ENCODE measurements at regions of chr9 and their contacts with region 1.

Region 1: DNA sequence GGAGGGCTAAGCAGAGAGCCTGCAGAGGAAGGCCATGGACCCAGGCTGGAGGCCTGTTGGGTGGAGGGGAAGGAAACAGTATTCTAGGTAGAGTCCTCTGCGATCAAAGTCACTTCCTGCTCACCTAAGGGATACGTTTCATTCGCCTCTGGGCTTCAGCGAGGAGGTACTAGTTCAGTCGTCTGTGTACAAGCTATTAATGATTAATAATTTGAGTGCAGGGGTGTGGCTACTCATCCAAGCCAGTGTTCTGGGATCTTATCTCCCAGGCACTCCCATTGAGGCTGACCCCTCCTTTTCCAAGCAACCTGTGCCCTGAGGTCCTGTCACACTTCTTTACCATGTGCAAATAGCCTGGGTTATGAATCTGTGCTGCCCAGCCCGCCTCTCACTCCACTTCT is 25.2 kb downstream of the RALGPS1 start:
- DNase-seq: no peak
- ATAC-seq: no peak
- H3K4me3 Mint-ChIP-seq: no peak overlapping the region
- H3K27ac Mint-ChIP-seq: no peak overlapping the region
- H3K4me1 Mint-ChIP-seq: peaks cover 16% of the 10 kb centered on the region
- H3K27me3 Mint-ChIP-seq: no peaks in the 10 kb centered on the region
- CTCF ChIP-seq: no peak

Region 2: DNA sequence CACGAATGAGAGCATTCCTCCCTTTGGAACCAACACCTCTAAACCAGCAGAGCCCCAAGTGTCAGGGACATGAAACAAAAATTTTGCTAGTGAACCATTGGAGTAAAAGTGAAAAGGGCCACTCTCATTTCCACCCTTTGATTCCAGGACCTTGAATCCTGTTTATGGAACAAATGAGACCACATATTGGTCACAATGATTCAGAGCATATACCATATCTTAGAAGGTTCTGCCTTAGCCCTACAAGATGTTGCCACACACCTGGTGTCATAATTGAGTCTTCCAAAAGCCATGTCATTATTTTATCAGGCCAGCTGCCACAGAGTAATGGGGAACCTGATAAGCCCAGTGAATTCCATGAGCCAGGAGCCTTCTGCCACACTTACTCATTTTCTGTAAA is 201.3 kb before region 1 on chr9:
- CTCF ChIA-PET with region 1: no interaction called
- POLR2A ChIA-PET with region 1: no interaction called
- DNase-seq: no peak
- ATAC-seq: no peak
- H3K4me3 Mint-ChIP-seq: no peak overlapping the region
- H3K27ac Mint-ChIP-seq: no peak overlapping the region
- H3K4me1 Mint-ChIP-seq: no peaks in the 10 kb centered on the region
- H3K27me3 Mint-ChIP-seq: peaks cover 63% of the 10 kb centered on the region
- CTCF ChIP-seq: no peak

Region 3: DNA sequence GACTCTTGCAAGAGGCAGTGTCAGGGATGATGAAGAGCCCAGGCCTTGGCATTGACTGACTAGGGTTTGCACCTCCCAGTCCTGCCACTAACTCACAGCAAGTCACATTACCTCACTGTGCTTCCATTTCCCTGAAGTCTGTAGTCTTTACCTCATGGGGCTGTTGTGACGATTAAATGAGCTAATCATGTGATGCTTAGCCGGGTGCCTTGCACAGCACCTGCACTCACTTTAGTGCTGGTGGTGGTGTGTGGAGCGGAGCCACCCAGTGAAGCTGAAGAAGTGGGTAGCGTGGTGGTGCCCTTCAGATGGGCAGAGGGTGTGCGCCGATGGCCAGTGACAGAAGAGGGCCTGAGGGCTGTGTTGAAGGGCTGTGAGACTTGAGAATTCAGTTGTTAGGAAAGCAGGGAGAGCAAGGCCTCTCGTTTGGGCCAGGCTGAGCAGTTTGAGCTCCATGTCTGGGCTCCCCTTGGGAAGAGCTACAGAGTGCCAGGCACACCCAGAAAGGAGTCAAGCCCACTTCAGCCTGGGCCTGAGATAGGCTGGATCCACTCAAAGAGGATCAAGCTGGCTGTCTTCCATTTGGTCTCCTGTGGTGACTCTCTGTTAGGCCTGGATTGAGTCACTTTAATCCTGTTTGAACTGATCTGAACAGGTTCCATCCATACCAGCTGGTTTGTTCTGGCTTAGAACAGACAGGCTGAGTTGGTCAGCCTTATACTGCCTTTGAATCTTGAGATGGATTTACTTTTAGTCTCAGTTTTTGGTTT is 17.3 kb after region 1 on chr9:
- CTCF ChIA-PET with region 1: interaction called, 19 read pairs
- POLR2A ChIA-PET with region 1: no interaction called
- DNase-seq: no peak
- ATAC-seq: peak; percentile 41
- H3K4me3 Mint-ChIP-seq: no peak overlapping the region
- H3K27ac Mint-ChIP-seq: peak overlapping the region; percentile 95
- H3K4me1 Mint-ChIP-seq: peaks cover 5% of the 10 kb centered on the region
- H3K27me3 Mint-ChIP-seq: no peaks in the 10 kb centered on the region
- CTCF ChIP-seq: no peak

Region 4: GRCh38 chr9:126965541-126966428 is 26.0 kb after region 1 on chr9:
- CTCF ChIA-PET with region 1: interaction called, 32 read pairs
- POLR2A ChIA-PET with region 1: no interaction called
- DNase-seq: peak; percentile 57
- ATAC-seq: peak; percentile 94
- H3K4me3 Mint-ChIP-seq: no peak overlapping the region
- H3K27ac Mint-ChIP-seq: peak overlapping the region; percentile 78
- H3K4me1 Mint-ChIP-seq: peaks cover 16% of the 10 kb centered on the region
- H3K27me3 Mint-ChIP-seq: no peaks in the 10 kb centered on the region
- CTCF ChIP-seq: peak; percentile 34; the same call in 1 of the 2 replicates